IMR-90 (cell line): ENCODE measurements at regions of chr14 and their contacts with region 1.

Region 1: GRCh38 chr14:24241829-24242443 is 487 bp downstream of the TINF2 start:
- DNase-seq: peak; percentile 89
- ATAC-seq: peak; percentile 93
- H3K4me3 ChIP-seq: peak overlapping the region; percentile 82
- H3K27ac ChIP-seq: peak overlapping the region; percentile 90
- H3K4me1 ChIP-seq: peaks cover 13% of the 10 kb centered on the region
- H3K27me3 ChIP-seq: no peaks in the 10 kb centered on the region
- CTCF ChIP-seq: peak; percentile 45
- POLR2A ChIP-seq: no peak
- RAD21 ChIP-seq: no peak

Region 2: DNA sequence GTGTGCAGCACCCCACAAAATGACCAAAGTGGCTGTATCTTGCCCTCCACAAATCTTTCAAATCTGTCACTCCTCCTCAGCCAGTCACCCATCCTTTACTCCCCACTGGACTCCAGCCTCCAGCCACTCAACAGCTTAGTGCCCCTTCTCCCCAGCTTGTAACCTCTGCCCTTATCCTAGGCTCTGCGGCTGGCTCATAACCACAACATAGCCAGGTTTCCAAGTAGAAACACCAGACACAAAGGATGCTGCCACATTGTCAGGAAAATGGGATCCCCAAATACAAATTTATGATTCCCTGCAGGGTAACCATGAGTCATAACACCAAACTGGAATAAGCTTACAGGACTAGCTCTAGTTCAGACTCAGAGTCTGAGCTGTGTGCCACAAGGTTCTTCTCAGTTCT is 1460.3 kb before region 1 on chr14:
- CTCF ChIA-PET with region 1: no interaction called
- POLR2A ChIA-PET with region 1: no interaction called
- dilution Hi-C with region 1: no loop called
- in situ Hi-C with region 1: no loop called
- intact Hi-C with region 1: no loop called
- DNase-seq: peak; percentile 43
- ATAC-seq: peak; percentile 70
- H3K4me3 ChIP-seq: no peak overlapping the region
- H3K27ac ChIP-seq: no peak overlapping the region
- H3K4me1 ChIP-seq: peaks cover 12% of the 10 kb centered on the region
- H3K27me3 ChIP-seq: no peaks in the 10 kb centered on the region
- CTCF ChIP-seq: no peak
- POLR2A ChIP-seq: no peak
- RAD21 ChIP-seq: no peak

Region 3: GRCh38 chr14:23727566-23728335 is 514.2 kb before region 1 on chr14:
- CTCF ChIA-PET with region 1: no interaction called
- POLR2A ChIA-PET with region 1: no interaction called
- dilution Hi-C with region 1: no loop called
- in situ Hi-C with region 1: no loop called
- intact Hi-C with region 1: no loop called
- DNase-seq: peak; percentile 26
- ATAC-seq: peak; percentile 94
- H3K4me3 ChIP-seq: no peak overlapping the region
- H3K27ac ChIP-seq: no peak overlapping the region
- H3K4me1 ChIP-seq: no peaks in the 10 kb centered on the region
- H3K27me3 ChIP-seq: no peaks in the 10 kb centered on the region
- CTCF ChIP-seq: peak; percentile 41; the same call in 1 of the 2 replicates
- POLR2A ChIP-seq: no peak
- RAD21 ChIP-seq: peak; percentile 50

Region 4: GRCh38 chr14:24032721-24033418 is 209.1 kb before region 1 on chr14:
- CTCF ChIA-PET with region 1: no interaction called
- POLR2A ChIA-PET with region 1: no interaction called
- dilution Hi-C with region 1: no loop called
- in situ Hi-C with region 1: no loop called
- intact Hi-C with region 1: no loop called
- DNase-seq: peak; percentile 79
- ATAC-seq: no peak
- H3K4me3 ChIP-seq: no peak overlapping the region
- H3K27ac ChIP-seq: no peak overlapping the region
- H3K4me1 ChIP-seq: no peaks in the 10 kb centered on the region
- H3K27me3 ChIP-seq: no peaks in the 10 kb centered on the region
- CTCF ChIP-seq: no peak
- POLR2A ChIP-seq: no peak
- RAD21 ChIP-seq: no peak

Region 5: DNA sequence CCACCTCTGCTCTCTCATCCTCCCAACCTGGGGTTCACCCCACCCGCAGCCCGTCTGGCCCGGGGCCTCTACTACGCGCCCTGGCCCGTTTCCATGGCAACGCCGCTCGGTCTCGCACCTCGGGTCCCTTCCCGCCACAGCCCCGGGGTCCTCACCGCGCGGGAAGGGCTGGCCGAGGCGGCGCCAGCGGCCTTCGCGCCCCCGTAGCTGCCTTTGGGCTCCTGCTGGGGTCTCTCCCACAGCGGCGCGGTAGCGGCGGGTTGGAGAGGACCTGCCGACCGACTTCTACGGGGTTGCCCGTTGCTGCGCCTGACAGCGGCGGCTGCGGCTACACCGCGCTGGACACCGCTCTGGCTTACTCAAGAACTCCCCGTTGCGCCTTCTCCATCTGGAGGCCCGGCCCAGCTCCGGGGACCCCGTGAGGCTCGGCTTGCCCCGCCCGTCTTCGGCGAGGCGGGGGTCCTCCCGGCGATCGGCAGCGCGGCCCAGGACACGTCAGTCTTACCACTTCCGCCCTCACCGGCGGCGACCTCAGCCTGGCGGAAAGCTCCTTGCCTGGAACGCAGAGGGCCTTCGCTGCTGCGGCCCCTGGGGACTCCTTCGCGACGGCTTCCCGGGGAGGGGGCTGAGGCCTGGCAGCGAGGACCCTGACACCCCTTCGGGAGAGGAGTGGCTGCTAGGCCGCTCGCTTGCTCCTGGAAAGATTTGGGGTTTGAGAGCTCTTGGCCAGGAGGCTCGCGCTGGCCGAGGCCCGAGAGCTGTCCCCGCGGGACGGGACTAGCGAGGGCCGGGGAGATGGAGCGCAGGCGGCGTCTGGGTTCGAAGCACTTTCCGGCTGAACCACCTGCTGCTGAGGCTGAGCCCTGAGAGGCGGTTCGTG is 46.5 kb before region 1 on chr14 and contains the start of gene TM9SF1:
- CTCF ChIA-PET with region 1: no interaction called
- POLR2A ChIA-PET with region 1: interaction called, 3 read pairs
- dilution Hi-C with region 1: no loop called
- in situ Hi-C with region 1: no loop called
- intact Hi-C with region 1: loop called (anchors 1 kb)
- DNase-seq: peak; percentile 87
- ATAC-seq: peak; percentile 93
- H3K4me3 ChIP-seq: peak within 1 kb of the TSS; percentile 89
- H3K27ac ChIP-seq: peak within 1 kb of the TSS; percentile 99
- H3K4me1 ChIP-seq: peaks cover 8% of the 10 kb centered on the region
- H3K27me3 ChIP-seq: no peaks in the 10 kb centered on the region
- CTCF ChIP-seq: no peak
- POLR2A ChIP-seq: peak; percentile 72
- RAD21 ChIP-seq: no peak
- total RNA-seq, gene TM9SF1: 51.9 and 65.6 TPM in 2 replicates

Region 6: DNA sequence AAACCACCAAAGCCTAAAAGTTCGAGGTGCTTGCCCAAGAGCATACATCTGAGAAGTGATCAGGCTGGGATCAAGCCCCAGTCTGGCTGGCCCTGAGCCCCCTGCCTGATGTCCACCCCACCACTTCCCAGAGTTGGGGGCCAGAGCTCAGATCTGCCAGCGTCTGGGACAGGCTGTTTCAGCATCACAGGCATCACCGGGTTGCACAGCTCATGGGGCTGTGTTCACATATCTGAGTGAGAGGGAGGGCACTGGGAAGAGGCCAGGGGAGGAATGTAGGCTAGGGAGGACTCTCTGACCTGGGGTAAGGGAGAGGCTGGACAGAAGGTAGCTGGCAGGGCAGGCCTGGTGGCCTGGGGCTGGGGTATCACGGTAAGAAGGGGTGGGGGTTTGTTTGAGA is 15.0 kb after region 1 on chr14:
- CTCF ChIA-PET with region 1: interaction called, 10 read pairs
- POLR2A ChIA-PET with region 1: interaction called, 11 read pairs
- dilution Hi-C with region 1: no loop called
- in situ Hi-C with region 1: no loop called
- intact Hi-C with region 1: no loop called
- DNase-seq: no peak
- ATAC-seq: 0 out of 2 replicates have a peak, but pooled peaks have one; percentile 31
- H3K4me3 ChIP-seq: no peak overlapping the region
- H3K27ac ChIP-seq: no peak overlapping the region
- H3K4me1 ChIP-seq: peaks cover 16% of the 10 kb centered on the region
- H3K27me3 ChIP-seq: no peaks in the 10 kb centered on the region
- CTCF ChIP-seq: no peak
- POLR2A ChIP-seq: no peak
- RAD21 ChIP-seq: no peak

Region 7: DNA sequence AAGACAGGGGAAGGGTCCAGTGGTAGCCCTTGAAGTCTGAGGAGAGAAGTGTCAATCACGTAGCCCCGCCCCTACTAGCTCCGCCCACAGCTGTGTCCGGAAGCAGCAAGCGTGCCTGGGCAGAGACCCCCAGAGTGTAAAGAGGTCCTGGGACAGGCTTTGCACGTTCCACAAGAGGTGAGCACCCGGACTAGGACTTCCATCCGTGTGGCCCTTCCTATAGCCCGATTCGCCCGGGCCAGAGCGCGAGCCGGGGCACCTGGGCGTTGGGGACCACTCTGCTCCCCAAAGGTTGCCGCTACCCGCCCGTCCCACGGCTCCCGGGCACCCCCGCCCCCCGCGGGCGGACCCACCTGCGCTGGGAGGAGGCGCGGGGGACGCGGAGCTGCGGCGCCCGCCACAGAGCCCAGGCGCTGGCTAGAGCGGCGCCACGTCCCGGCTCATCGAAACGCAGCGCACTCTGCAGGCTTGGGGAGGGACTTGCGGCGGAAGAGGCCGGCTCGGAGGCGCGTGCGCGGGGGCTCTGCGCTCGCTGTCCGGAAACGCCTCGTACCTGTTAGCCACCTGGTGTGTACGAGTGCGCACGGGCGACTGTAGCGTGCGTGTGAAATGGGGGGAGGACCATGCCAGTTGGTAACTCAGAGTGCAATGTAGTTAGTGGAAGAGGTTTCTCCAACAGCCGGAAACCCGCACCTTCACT is 29.3 kb after region 1 on chr14 and contains the start of gene RABGGTA:
- CTCF ChIA-PET with region 1: interaction called, 11 read pairs
- POLR2A ChIA-PET with region 1: no interaction called
- dilution Hi-C with region 1: no loop called
- in situ Hi-C with region 1: no loop called
- intact Hi-C with region 1: loop called (anchors 2 kb)
- DNase-seq: peak; percentile 83
- ATAC-seq: peak; percentile 100
- H3K4me3 ChIP-seq: peak within 1 kb of the TSS; percentile 63
- H3K27ac ChIP-seq: peak within 1 kb of the TSS; percentile 89
- H3K4me1 ChIP-seq: peaks cover 5% of the 10 kb centered on the region; the same call in 1 of the 2 replicates
- H3K27me3 ChIP-seq: no peaks in the 10 kb centered on the region
- CTCF ChIP-seq: peak; percentile 87
- POLR2A ChIP-seq: peak; percentile 63; the same call in 1 of the 2 replicates
- RAD21 ChIP-seq: 0 out of 2 replicates have a peak, but pooled peaks have one; percentile 30
- total RNA-seq, gene RABGGTA: 25.6 and 27.2 TPM in 2 replicates

Region 8: GRCh38 chr14:24456980-24457379 is 215.0 kb after region 1 on chr14:
- CTCF ChIA-PET with region 1: no interaction called
- POLR2A ChIA-PET with region 1: no interaction called
- dilution Hi-C with region 1: no loop called
- in situ Hi-C with region 1: no loop called
- intact Hi-C with region 1: no loop called
- DNase-seq: no peak
- ATAC-seq: no peak
- H3K4me3 ChIP-seq: no peak overlapping the region
- H3K27ac ChIP-seq: no peak overlapping the region
- H3K4me1 ChIP-seq: no peaks in the 10 kb centered on the region
- H3K27me3 ChIP-seq: no peaks in the 10 kb centered on the region
- CTCF ChIP-seq: no peak
- POLR2A ChIP-seq: no peak
- RAD21 ChIP-seq: no peak